PC-3 (cell line): ENCODE measurements at regions of chr2 and their contacts with region 1.

Region 1: DNA sequence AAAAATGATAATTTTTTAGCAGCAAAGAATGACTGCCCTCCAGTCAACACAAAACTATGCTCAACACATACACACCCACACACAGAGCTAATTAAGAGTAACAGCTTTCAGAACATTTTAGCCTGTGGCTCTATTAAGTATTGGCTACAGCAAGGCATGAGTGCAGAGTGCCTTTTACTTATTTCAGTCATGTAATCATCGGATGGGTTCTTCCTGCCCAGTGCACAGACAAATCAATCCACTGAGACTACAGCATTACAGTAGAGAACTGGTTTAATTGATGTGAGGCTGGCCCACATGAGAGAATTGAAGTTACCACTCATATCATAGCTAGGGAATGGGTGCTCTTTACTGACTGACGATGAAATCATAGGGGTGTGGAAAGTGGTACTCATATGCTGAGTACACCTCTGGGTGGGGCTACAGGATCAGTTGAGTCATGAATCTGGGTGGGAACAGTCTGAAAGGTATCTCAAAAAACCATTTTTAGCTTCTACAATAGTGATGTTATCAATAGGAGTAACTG is 241.0 kb downstream of the FSIP2 start:
- DNase-seq: peak; percentile 92
- ATAC-seq: peak; percentile 90
- H3K4me3 ChIP-seq: peak overlapping the region; percentile 4; the same call in 1 of the 2 replicates
- H3K27ac ChIP-seq: peak overlapping the region; percentile 94
- H3K4me1 ChIP-seq: peaks cover 20% of the 10 kb centered on the region
- H3K27me3 ChIP-seq: no peaks in the 10 kb centered on the region
- CTCF ChIP-seq: peak; percentile 56

Region 2: DNA sequence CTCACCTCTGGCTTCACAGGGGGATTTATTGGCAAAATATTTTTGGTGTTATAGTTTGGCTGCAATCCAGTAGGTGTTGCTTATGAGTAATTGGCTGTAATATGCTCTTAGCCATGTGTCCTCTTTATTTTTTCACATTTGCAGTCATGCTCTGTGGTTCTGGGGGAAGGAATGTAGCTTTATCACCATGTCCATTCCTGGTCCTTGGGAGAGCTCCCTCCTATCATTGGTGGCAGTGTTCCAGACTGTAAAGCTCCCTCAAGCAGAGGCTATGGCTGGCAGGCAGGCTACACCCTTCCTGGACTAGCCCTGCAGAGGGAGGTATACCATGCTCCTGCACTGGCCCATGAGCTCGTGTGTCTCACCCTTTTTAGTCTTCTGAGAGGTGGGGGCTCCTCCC is 361.0 kb before region 1 on chr2:
- CTCF ChIA-PET with region 1: no interaction called
- POLR2A ChIA-PET with region 1: no interaction called
- intact Hi-C with region 1: loop called (anchors 10 kb)
- DNase-seq: peak; percentile 67
- ATAC-seq: peak; percentile 64
- H3K4me3 ChIP-seq: no peak overlapping the region
- H3K27ac ChIP-seq: no peak overlapping the region
- H3K4me1 ChIP-seq: peaks cover 11% of the 10 kb centered on the region
- H3K27me3 ChIP-seq: no peaks in the 10 kb centered on the region
- CTCF ChIP-seq: peak; percentile 32; the same call in 1 of the 2 replicates

Region 3: DNA sequence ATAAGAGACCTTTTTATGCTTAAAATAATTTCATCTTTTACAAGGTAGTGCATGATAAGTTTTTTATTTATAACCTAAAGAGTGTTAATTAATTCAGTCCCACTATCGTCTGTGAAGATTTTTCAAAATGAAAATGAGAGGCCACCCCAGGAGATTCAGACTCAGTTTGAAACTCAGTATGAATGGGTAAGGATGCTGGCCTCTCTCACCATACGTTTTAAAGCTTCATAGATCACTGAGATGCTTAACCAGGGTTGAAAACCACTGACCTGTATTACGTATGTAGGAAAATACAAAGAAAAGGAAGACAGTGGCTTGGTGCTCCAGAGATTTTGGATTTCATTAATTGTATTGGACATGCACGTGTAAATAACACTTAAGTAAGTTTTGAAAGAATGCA is 37.7 kb after region 1 on chr2:
- CTCF ChIA-PET with region 1: no interaction called
- POLR2A ChIA-PET with region 1: no interaction called
- intact Hi-C with region 1: no loop called
- DNase-seq: no peak
- ATAC-seq: no peak
- H3K4me3 ChIP-seq: no peak overlapping the region
- H3K27ac ChIP-seq: no peak overlapping the region
- H3K4me1 ChIP-seq: no peaks in the 10 kb centered on the region
- H3K27me3 ChIP-seq: no peaks in the 10 kb centered on the region
- CTCF ChIP-seq: no peak

Region 4: GRCh38 chr2:186129767-186130581 is 150.4 kb after region 1 on chr2:
- CTCF ChIA-PET with region 1: interaction called, 5 read pairs
- POLR2A ChIA-PET with region 1: interaction called, 3 read pairs
- intact Hi-C with region 1: loop called (anchors 10 kb)
- DNase-seq: peak; percentile 87
- ATAC-seq: peak; percentile 75
- H3K4me3 ChIP-seq: peak overlapping the region; percentile 40; the same call in 1 of the 2 replicates
- H3K27ac ChIP-seq: peak overlapping the region; percentile 87
- H3K4me1 ChIP-seq: peaks cover 47% of the 10 kb centered on the region
- H3K27me3 ChIP-seq: no peaks in the 10 kb centered on the region
- CTCF ChIP-seq: no peak

Region 5: GRCh38 chr2:186274936-186275575 is 295.4 kb after region 1 on chr2:
- CTCF ChIA-PET with region 1: interaction called, 19 read pairs
- POLR2A ChIA-PET with region 1: no interaction called
- intact Hi-C with region 1: no loop called
- DNase-seq: peak; percentile 61
- ATAC-seq: peak; percentile 37; the same call in 1 of the 2 replicates
- H3K4me3 ChIP-seq: no peak overlapping the region
- H3K27ac ChIP-seq: no peak overlapping the region
- H3K4me1 ChIP-seq: peaks cover 6% of the 10 kb centered on the region
- H3K27me3 ChIP-seq: no peaks in the 10 kb centered on the region
- CTCF ChIP-seq: no peak

Region 6: DNA sequence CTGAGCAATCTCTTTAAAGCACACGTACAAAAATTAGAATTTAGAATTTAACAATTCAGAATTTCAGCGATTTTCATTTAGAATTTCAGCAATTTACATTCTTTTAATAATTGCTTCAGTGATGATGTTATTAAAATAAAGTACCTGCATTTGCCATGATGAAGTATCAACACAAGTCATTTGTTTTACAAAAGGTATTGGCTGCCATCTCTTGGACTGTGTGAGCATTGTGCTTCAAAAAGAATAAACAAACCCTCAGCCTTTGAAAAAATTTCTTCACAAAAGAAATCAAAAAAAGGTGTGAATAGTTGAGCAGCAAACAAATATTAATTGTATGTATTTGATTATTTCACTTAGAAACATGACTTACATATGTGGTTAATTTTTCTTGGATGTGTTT is 479.4 kb after region 1 on chr2:
- CTCF ChIA-PET with region 1: no interaction called
- POLR2A ChIA-PET with region 1: interaction called, 4 read pairs
- intact Hi-C with region 1: loop called (anchors 1 kb)
- DNase-seq: peak; percentile 68
- ATAC-seq: peak; percentile 50
- H3K4me3 ChIP-seq: no peak overlapping the region
- H3K27ac ChIP-seq: no peak overlapping the region
- H3K4me1 ChIP-seq: peaks cover 16% of the 10 kb centered on the region
- H3K27me3 ChIP-seq: no peaks in the 10 kb centered on the region
- CTCF ChIP-seq: peak; percentile 75